ENCODE measurements at regions of chr5 and their contacts with region 1.

Region 1: GRCh38 chr5:120073722-120074121 is 390.4 kb upstream of the PRR16 start:
- DNase-seq: no peak
- ATAC-seq: no peak
- H3K4me3 ChIP-seq: no peak overlapping the region
- H3K27ac ChIP-seq: no peak overlapping the region
- H3K4me1 ChIP-seq: no peaks in the 10 kb centered on the region
- H3K27me3 ChIP-seq: no peaks in the 10 kb centered on the region
- CTCF ChIP-seq: no peak

Region 2: GRCh38 chr5:120913396-120913795 is 839.7 kb after region 1 on chr5:
- intact Hi-C with region 1: loop called in 1 of 2 experiments (anchors 5 kb)
- DNase-seq: no peak
- ATAC-seq: no peak
- H3K4me3 ChIP-seq: no peak overlapping the region
- H3K27ac ChIP-seq: no peak overlapping the region
- H3K4me1 ChIP-seq: no peaks in the 10 kb centered on the region
- H3K27me3 ChIP-seq: no peaks in the 10 kb centered on the region
- CTCF ChIP-seq: no peak